ENCODE measurements at regions of chr20 and their contacts with region 1.

Region 1: GRCh38 chr20:48862313-48862678 is 34.5 kb upstream of the PREX1 start:
- DNase-seq: no peak
- ATAC-seq: no peak
- H3K4me3 ChIP-seq: no peak overlapping the region
- H3K27ac ChIP-seq: no peak overlapping the region
- H3K4me1 ChIP-seq: peaks cover 15% of the 10 kb centered on the region
- H3K27me3 ChIP-seq: no peaks in the 10 kb centered on the region
- CTCF ChIP-seq: no peak

Region 2: DNA sequence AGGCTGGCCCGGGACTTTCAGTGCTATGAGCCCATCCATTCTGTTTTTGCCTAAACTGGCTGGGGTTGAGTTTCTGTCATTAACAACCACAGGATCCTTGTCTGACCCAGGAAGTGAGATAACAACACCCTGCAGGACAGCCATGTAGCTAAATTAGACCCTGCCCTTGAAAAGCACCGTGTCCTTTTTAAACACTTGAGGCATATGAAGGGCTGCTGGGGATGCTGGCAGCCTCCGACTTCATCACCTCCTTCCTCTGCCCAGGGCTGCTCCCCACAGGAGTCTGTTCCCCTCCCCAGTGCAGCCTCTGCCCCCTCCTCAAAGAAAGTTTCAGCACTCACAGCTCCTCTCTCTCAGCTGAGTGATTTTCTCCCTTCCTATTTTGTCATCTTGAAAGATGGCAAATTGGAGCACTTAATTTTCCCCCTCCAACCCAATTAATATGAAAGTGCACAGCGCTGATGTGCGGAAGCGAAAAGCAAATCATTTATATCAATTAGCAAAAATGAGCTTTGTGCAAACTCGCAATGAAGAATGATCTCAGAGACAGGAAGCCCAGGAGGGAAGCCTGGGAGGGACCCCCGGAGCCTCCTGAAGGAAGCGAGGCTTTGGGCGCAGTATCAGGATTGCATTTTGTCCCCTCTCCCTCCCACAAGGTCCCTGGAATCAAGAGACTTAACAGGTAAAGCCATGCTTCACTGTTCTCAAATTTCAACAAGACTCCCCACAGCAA is 280.2 kb before region 1 on chr20:
- CTCF ChIA-PET with region 1: no interaction called
- POLR2A ChIA-PET with region 1: interaction called, 12 read pairs
- intact Hi-C with region 1: no loop called
- DNase-seq: no peak
- ATAC-seq: no peak
- H3K4me3 ChIP-seq: no peak overlapping the region
- H3K27ac ChIP-seq: no peak overlapping the region
- H3K4me1 ChIP-seq: no peaks in the 10 kb centered on the region
- H3K27me3 ChIP-seq: peaks cover 47% of the 10 kb centered on the region
- CTCF ChIP-seq: no peak

Measured in PC-3 (cell line).